ENCODE measurements at regions of chr22 and their contacts with region 1.

Region 1: DNA sequence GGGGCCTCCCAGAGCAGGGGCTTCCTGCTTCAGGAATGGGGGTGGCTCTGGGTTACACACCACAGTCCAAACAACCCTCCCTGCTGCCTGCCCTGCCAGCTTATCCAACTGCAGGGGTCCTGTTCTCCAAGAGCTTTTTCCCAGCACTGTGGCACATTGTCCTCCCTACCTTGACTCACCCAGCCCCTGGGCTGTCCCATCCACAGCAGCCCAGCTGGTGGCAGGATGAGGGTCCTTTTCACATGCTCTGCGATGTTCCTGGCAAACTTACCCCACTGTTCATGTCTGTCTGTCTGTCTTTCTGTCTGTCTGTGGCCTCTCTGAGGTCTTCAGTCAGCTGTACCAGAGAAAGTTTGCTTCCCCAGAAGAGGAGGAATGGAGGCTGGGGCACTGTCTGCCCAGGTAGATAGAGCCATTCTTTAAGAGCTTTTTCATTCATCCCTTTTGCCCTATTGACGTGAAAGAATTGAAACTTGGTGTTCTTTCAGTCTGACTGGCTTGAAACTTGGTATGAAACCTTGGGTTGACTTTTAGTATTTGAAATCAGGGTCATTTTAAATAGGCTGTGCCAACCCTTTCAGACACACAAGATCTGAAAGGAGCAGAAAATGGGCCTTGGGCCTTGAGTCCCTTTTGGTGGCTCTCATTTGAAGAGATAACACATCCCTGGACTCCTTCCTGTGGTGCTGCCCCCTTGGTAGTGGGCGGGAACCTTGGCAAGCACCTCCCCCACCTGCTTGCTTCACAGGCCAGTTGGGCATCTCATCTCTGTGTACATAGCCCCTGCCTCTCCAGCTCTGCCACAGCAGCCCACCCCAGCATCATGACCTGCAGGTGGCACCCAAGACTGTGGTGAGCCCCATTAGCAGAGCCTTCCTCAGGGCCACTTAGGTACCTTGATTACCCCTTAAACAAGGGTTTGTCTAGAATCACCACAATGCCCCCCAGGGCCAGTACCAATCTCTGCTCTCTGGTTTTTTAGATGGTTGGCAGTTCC is 74.6 kb upstream of the SUSD2 start:
- DNase-seq: peak; percentile 31 to 50 (median 35)
- H3K4me3 ChIP-seq: no peak overlapping the region
- H3K4me3 Mint-ChIP-seq: no peak overlapping the region
- H3K27ac ChIP-seq: no peak overlapping the region
- H3K27ac Mint-ChIP-seq: peak overlapping the region in 3 of 7 donors; percentile 50 to 51 (median 50)
- H3K4me1 ChIP-seq: no peaks in the 10 kb centered on the region
- H3K4me1 Mint-ChIP-seq: peaks cover 5 to 21% (median 7%) of the 10 kb centered on the region in 4 donors
- H3K27me3 ChIP-seq: no peaks in the 10 kb centered on the region
- H3K27me3 Mint-ChIP-seq: no peaks in the 10 kb centered on the region

Region 2: GRCh38 chr22:24076091-24076867 is 30.4 kb before region 1 on chr22:
- CTCF ChIA-PET with region 1: no interaction called
- POLR2A ChIA-PET with region 1: no interaction called
- intact Hi-C with region 1: no loop called
- DNase-seq: no peak
- H3K4me3 ChIP-seq: no peak overlapping the region
- H3K4me3 Mint-ChIP-seq: no peak overlapping the region
- H3K27ac ChIP-seq: no peak overlapping the region
- H3K27ac Mint-ChIP-seq: peak overlapping the region in 2 of 7 donors; percentile 31 to 57
- H3K4me1 ChIP-seq: no peaks in the 10 kb centered on the region
- H3K4me1 Mint-ChIP-seq: peaks cover 0 to 1% (median 0%) of the 10 kb centered on the region in 4 donors
- H3K27me3 ChIP-seq: no peaks in the 10 kb centered on the region
- H3K27me3 Mint-ChIP-seq: no peaks in the 10 kb centered on the region

Region 3: DNA sequence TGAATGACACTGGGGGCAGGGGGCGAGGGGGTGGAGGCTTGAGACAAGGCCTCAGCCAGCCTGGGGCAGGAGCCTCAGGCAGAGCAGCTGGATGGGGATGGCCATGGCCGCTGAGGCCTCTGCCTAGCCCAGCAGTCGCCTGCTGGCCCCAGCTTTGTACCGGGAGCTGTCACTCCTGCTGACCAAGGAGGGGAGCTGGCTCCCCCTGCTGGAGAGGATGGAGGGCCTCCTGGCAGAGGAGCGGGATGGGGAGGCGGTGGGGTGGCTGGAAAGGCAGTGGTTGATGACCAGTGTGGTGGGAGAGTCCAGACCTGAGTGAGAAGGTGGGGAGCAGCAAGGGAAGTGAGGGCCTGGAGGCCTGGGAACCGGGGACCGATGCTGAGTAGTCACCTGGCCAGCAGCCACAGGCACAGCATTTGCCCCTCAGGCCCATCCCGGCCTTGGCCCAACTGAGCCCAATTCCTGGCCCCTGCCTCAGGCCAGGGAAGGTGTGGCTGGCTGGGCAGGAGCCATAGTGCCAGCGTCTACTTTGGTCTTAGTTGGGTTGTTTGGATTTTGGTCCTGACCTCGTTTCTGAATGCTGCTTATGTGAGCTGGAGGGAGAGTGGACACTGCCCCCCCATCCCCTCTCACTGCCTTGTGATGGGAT is 68.6 kb after region 1 on chr22:
- CTCF ChIA-PET with region 1: interaction called, 29 read pairs
- POLR2A ChIA-PET with region 1: no interaction called
- intact Hi-C with region 1: loop called (anchors 1 kb)
- DNase-seq: peak; percentile 48 to 55 (median 49)
- H3K4me3 ChIP-seq: no peak overlapping the region
- H3K4me3 Mint-ChIP-seq: no peak overlapping the region
- H3K27ac ChIP-seq: no peak overlapping the region
- H3K27ac Mint-ChIP-seq: peak overlapping the region in 3 of 7 donors; percentile 13 to 83 (median 79)
- H3K4me1 ChIP-seq: no peaks in the 10 kb centered on the region
- H3K4me1 Mint-ChIP-seq: no peaks in the 10 kb centered on the region
- H3K27me3 ChIP-seq: no peaks in the 10 kb centered on the region
- H3K27me3 Mint-ChIP-seq: no peaks in the 10 kb centered on the region

Region 4: GRCh38 chr22:24230911-24231656 is 124.4 kb after region 1 on chr22:
- CTCF ChIA-PET with region 1: interaction called, 5 read pairs
- POLR2A ChIA-PET with region 1: no interaction called
- intact Hi-C with region 1: loop called (anchors 1 kb)
- DNase-seq: peak; percentile 38 to 48 (median 39)
- H3K4me3 ChIP-seq: no peak overlapping the region
- H3K4me3 Mint-ChIP-seq: no peak overlapping the region
- H3K27ac ChIP-seq: no peak overlapping the region
- H3K27ac Mint-ChIP-seq: no peak overlapping the region
- H3K4me1 ChIP-seq: no peaks in the 10 kb centered on the region
- H3K4me1 Mint-ChIP-seq: no peaks in the 10 kb centered on the region
- H3K27me3 ChIP-seq: no peaks in the 10 kb centered on the region
- H3K27me3 Mint-ChIP-seq: peaks cover 0 to 2% of the 10 kb centered on the region in 2 donors

Region 5: DNA sequence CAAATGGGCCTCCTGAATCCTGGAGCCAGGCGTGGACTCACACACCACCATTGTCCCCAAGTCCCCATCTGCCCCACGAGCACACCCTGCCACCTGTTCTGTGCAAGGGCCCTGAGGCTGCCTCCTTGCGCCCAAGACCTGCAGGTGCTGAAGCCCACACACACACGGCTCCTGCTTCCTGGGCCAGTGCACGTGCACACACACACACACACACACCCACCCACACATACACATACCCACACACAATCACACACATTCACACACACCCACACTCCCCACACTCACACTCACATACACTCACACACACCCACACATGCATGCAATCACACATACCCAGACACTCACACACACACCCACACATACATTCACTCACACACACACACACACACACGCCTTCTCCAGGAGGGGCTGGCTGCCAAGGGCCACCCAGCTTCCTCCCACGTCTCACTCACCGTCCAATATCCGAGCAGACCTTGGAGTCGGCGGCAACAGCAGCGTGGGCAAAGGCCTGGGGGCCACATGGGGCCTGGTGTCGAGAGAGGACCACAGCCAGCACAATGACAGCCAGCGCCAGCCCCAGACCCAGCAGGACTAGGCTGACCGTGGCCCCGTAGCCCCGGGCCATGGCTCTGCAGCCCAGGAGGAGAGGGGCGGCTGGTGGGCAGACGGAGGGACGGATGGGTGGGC is 137.6 kb after region 1 on chr22:
- CTCF ChIA-PET with region 1: interaction called, 4 read pairs
- POLR2A ChIA-PET with region 1: no interaction called
- intact Hi-C with region 1: loop called (anchors 5 kb)
- DNase-seq: no peak
- H3K4me3 ChIP-seq: no peak overlapping the region
- H3K4me3 Mint-ChIP-seq: peak overlapping the region in 4 of 8 donors; percentile 10 to 61 (median 52)
- H3K27ac ChIP-seq: no peak overlapping the region
- H3K27ac Mint-ChIP-seq: peak overlapping the region in 2 of 7 donors; percentile 15 to 79
- H3K4me1 ChIP-seq: peaks cover 25% of the 10 kb centered on the region
- H3K4me1 Mint-ChIP-seq: peaks cover 15 to 42% (median 27%) of the 10 kb centered on the region in 4 donors
- H3K27me3 ChIP-seq: no peaks in the 10 kb centered on the region
- H3K27me3 Mint-ChIP-seq: no peaks in the 10 kb centered on the region